Common myeloid progenitor, CD34-positive (primary cell): ENCODE measurements at regions of chr9 and their contacts with region 1.

Region 1: GRCh38 chr9:130756037-130756436 is 62.5 kb downstream of the EXOSC2 start:
- DNase-seq: no peak
- H3K4me3 ChIP-seq: peak overlapping the region in 2 of 7 experiments; percentile 56 to 57
- H3K27ac ChIP-seq: no peak overlapping the region
- H3K4me1 ChIP-seq: peaks cover 5 to 29% (median 20%) of the 10 kb centered on the region in 4 experiments
- H3K27me3 ChIP-seq: no peaks in the 10 kb centered on the region

Region 2: DNA sequence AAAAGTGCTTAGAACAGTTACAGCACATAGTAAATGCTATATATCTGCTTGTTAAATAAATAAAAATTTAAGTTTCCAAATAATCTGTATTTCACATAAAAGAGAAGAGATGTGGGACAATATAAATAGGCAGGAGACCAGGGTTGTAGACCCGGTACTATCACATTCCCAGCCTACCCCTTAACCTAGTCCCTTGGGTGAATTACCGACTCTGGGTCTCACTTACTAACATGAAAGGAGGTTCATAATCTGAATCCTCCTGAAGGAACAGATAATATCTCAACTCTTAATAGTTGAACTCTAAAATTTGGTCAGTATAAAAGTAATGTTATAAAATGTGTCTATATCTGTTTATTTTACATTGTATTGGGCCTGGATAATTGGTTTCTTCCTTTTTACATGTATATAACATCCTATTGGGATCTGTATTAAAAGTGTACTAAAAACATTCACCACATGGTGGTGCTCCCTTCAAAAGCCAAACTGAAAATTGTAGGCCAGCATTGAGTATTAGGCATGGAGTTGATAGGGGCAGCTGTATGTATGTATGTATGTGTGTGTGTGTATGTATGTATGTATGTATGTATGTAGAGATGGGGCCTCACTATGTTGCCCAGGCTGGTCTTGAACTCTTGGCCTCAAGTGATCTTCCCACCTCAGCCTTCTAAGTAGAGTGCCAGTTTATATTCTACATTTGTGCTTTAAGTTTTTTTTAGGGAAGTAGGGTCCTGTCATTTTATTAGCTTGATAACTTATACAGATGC is 14.8 kb after region 1 on chr9:
- CTCF ChIA-PET with region 1: interaction called, 10 read pairs
- POLR2A ChIA-PET with region 1: no interaction called
- DNase-seq: peak; percentile 81 to 85 (median 81)
- H3K4me3 ChIP-seq: no peak overlapping the region
- H3K27ac ChIP-seq: no peak overlapping the region
- H3K4me1 ChIP-seq: peaks cover 3 to 32% (median 20%) of the 10 kb centered on the region in 4 experiments
- H3K27me3 ChIP-seq: no peaks in the 10 kb centered on the region

Region 3: GRCh38 chr9:130857864-130858738 is 102.1 kb after region 1 on chr9:
- CTCF ChIA-PET with region 1: no interaction called
- POLR2A ChIA-PET with region 1: no interaction called
- DNase-seq: no peak
- H3K4me3 ChIP-seq: no peak overlapping the region
- H3K27ac ChIP-seq: no peak overlapping the region
- H3K4me1 ChIP-seq: no peaks in the 10 kb centered on the region
- H3K27me3 ChIP-seq: no peaks in the 10 kb centered on the region